Calu3 (cell line): ENCODE measurements at regions of chr16 and their contacts with region 1.

Region 1: DNA sequence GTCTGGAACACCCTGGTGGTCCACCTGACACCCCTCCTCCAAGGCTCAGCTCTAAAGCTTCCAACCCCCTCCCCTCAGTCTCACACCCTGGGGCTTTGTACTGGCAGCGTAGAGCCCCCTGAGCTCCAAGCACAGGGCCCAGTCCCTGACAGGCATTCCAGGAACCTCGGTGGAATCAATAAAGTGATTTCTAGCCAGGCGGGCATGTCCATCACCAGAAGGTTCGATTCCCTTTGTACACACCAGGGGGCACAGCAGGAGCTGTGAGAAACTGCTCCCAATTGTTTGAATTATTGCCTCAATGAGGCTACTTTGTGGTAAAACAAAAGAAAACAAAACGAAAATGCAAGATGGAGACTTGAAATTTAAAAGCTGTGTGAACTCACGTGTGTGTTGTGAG is 51.8 kb downstream of the SMPD3 start:
- DNase-seq: peak; percentile 83
- H3K4me3 Mint-ChIP-seq: no peak overlapping the region
- H3K27ac Mint-ChIP-seq: peak overlapping the region; percentile 37
- H3K4me1 Mint-ChIP-seq: peaks cover 8% of the 10 kb centered on the region
- H3K27me3 Mint-ChIP-seq: peaks cover 29% of the 10 kb centered on the region
- CTCF ChIP-seq: peak; percentile 83

Region 2: DNA sequence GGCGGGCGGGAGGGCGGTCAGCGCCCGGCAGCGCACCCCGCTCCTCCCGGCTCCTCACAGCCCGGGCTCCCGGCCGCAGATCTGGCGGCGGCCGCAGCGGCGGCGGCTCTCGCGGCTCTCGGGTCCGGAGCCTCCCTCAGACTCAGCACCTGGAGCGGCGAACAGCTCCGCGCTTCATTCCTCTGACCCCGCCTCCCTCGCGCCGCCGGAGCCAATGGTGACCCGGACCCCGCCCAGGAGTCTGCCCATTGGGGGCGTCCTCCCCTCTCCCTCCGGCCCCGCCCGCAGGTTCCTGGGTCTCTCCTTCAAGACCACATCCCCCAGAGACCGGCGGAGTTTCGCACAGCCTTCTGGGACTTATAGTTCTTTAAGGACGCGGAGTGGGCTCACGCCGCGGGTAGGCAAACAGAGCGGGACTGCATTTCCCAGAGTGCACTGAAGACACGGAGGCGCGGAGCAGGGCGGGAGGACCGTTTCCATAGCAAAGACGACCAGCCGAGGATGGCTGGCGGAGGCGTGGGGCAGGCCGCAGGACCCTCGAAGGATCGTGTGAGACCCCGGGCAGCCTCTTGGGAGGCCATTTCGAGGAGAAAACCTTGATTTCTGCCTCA is 52.0 kb after region 1 on chr16 and contains the start of gene SMPD3:
- CTCF ChIA-PET with region 1: interaction called, 4 read pairs
- intact Hi-C with region 1: loop called (anchors 5 kb)
- DNase-seq: peak; percentile 100
- H3K4me3 Mint-ChIP-seq: peak within 1 kb of the TSS; percentile 71
- H3K27ac Mint-ChIP-seq: peak within 1 kb of the TSS; percentile 33
- H3K4me1 Mint-ChIP-seq: peaks cover 16% of the 10 kb centered on the region
- H3K27me3 Mint-ChIP-seq: peaks cover 52% of the 10 kb centered on the region
- CTCF ChIP-seq: no peak
- total RNA-seq, gene SMPD3: 0.42 and 1.2 TPM in 2 replicates

Region 3: DNA sequence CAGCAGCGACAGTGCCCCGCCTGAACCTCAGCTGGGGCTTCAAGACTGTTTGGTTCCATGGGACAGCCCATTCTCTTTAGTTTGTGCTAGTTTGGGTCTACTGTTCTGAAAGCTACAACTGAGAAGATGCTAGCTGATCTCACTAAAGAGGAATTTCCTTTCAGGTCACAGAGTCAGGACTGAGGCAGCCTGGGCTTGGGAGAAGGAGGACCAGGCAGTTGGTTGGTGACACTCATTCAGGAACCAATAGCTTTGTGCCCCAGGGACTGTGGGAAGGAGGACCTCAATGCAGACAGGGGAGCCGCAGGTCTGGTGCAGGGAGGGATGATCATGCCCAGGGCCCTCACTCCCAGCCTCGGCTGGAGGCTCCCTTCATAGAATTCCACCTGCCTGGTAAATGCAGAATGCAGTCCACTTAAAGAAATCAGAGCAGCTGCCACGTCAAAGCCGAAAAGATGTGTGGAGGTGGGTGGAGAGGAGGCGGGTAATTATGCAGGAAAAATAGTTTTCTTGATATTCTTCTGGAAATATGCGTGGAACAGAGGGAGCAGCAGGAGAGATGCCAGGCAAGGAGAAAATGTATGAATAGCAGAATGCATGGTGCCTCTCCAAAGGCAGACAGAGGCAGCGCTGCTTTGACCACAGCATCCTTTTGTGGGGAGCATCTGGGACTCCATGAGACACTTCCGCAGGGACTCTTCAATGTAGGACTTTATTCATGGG is 110.0 kb after region 1 on chr16:
- CTCF ChIA-PET with region 1: interaction called, 3 read pairs
- intact Hi-C with region 1: loop called (anchors 5 kb)
- DNase-seq: no peak
- H3K4me3 Mint-ChIP-seq: no peak overlapping the region
- H3K27ac Mint-ChIP-seq: no peak overlapping the region
- H3K4me1 Mint-ChIP-seq: no peaks in the 10 kb centered on the region
- H3K27me3 Mint-ChIP-seq: peaks cover 86% of the 10 kb centered on the region
- CTCF ChIP-seq: no peak

Region 4: DNA sequence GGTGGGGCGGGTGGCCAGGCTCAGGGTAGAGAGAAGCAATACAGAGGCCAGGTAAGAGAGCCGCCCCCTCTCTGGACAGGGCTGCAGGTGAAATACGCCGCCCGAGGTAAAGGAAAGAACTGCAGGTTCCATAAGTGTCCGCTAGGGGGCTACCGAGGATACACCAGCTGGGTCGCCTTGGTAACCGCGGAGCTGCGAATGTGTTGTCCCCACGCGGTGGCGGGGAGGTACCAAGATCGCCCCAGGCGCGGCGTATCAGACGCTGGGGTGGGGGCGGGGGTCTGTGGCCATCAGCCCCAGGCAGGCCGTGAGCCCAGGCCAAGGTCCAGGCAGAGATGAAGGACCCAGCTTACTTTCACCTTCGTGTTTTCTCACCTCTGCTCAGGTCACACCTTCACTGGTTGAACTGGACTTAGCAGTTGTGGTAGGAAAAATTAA is 124.2 kb after region 1 on chr16:
- CTCF ChIA-PET with region 1: interaction called, 11 read pairs
- intact Hi-C with region 1: loop called (anchors 5 kb)
- DNase-seq: peak; percentile 96
- H3K4me3 Mint-ChIP-seq: peak overlapping the region; percentile 47
- H3K27ac Mint-ChIP-seq: no peak overlapping the region
- H3K4me1 Mint-ChIP-seq: peaks cover 11% of the 10 kb centered on the region
- H3K27me3 Mint-ChIP-seq: peaks cover 8% of the 10 kb centered on the region
- CTCF ChIP-seq: peak; percentile 100